ENCODE measurements at regions of chr3 and their contacts with region 1.

Region 1: DNA sequence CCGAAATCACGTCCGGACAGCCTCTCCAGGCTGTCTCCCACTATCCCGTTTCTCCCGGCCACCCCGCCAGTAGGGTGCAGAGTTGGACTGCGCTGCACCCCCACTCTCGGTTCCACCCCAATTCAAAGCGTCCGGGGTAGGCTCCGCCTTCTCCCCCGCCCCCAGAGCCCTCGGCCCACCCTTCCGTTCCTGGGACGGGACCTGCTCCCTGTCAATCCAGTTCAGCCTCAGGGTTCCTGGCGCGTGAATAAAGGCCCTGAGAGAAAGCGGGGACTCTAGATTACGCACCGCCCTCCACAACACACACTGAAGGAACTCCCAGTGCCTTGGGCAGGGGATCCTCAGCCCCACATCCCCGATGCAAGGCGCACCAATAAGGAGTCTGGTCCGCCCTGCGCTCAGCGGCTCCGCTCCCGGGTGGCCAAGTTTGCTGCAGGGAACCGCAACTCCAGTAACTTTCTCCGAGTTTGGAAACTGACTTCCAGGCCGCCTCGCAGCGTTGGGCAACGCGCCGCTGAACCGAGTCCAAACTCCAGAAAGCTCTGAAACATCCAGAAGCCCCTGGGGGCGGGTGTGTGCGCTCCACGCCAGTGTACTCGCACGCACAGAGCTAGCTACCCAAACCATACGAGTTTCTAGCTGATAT is 1.9 kb downstream of the ADAMTS9 start:
- DNase-seq: peak; percentile 90 to 96
- ATAC-seq: peak; percentile 85 to 90 (median 88)
- H3K4me3 ChIP-seq: peak overlapping the region; percentile 78
- H3K27ac ChIP-seq: peak overlapping the region; percentile 92
- H3K4me1 ChIP-seq: peaks cover 4% of the 10 kb centered on the region
- H3K27me3 ChIP-seq: no peaks in the 10 kb centered on the region
- CTCF ChIP-seq: peak; percentile 36

Region 2: DNA sequence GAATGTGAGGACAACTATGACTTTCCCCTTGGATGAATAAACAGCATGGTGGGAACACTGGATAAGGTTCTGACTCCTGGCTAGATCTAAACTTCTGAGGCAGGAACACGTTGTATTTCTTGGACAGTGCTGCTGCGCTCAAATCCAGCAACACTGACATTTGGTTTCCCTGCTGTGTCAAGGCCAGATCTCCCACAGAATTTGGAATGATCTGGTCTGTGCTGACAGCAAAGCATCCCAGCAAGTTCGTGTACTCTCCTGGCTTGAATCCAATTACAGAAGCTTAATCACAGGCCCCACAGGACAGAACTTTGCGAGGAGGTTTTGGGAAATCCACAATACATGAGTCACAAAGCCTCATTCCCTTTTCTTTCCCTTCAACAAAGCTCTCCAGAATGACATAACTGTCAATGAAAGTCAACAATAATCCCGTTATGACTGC is 90.6 kb before region 1 on chr3:
- intact Hi-C with region 1: no loop called
- DNase-seq: peak; percentile 35 to 53
- ATAC-seq: peak; percentile 46 to 90 (median 84)
- H3K4me3 ChIP-seq: no peak overlapping the region
- H3K27ac ChIP-seq: peak overlapping the region; percentile 46
- H3K4me1 ChIP-seq: peaks cover 14% of the 10 kb centered on the region
- H3K27me3 ChIP-seq: no peaks in the 10 kb centered on the region
- CTCF ChIP-seq: no peak

Region 3: GRCh38 chr3:64612082-64612860 is 73.7 kb before region 1 on chr3:
- intact Hi-C with region 1: loop called in 1 of 2 experiments (anchors 5 kb)
- DNase-seq: no peak
- ATAC-seq: peak; percentile 93 to 98 (median 97)
- H3K4me3 ChIP-seq: peak overlapping the region; percentile 52
- H3K27ac ChIP-seq: peak overlapping the region; percentile 85
- H3K4me1 ChIP-seq: peaks cover 48% of the 10 kb centered on the region
- H3K27me3 ChIP-seq: no peaks in the 10 kb centered on the region
- CTCF ChIP-seq: no peak

Region 4: GRCh38 chr3:64763980-64764379 is 78.1 kb after region 1 on chr3:
- intact Hi-C with region 1: loop called (anchors 5 kb)
- DNase-seq: no peak
- ATAC-seq: no peak
- H3K4me3 ChIP-seq: no peak overlapping the region
- H3K27ac ChIP-seq: no peak overlapping the region
- H3K4me1 ChIP-seq: peaks cover 22% of the 10 kb centered on the region
- H3K27me3 ChIP-seq: no peaks in the 10 kb centered on the region
- CTCF ChIP-seq: no peak

Region 5: GRCh38 chr3:65170390-65171042 is 484.6 kb after region 1 on chr3:
- intact Hi-C with region 1: loop called in 1 of 2 experiments (anchors 5 kb)
- DNase-seq: peak; percentile 84 to 92
- ATAC-seq: peak; percentile 49 to 92 (median 78)
- H3K4me3 ChIP-seq: no peak overlapping the region
- H3K27ac ChIP-seq: peak overlapping the region; percentile 59
- H3K4me1 ChIP-seq: no peaks in the 10 kb centered on the region
- H3K27me3 ChIP-seq: no peaks in the 10 kb centered on the region
- CTCF ChIP-seq: peak; percentile 47

Region 6: DNA sequence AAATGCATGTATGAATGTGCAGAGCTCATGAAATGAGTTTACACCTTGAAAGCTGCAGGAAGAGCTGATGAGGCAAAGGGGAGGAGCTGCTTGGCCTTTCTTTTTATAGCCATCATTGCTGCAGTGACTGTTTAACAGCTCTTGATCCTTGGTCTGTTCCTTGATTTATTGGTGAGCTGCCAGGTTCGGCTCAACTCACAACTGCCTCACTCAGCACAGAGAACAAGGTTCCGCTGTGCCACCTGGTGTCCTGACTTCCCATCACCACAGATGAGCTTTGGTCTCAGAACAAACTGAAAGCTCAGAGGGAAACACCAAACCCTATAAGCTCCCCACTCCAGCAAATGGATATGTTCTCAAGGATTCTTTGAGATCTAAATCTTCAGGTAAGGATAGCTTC is 726.7 kb after region 1 on chr3:
- intact Hi-C with region 1: loop called in 1 of 2 experiments (anchors 10 kb)
- DNase-seq: peak; percentile 25 to 69
- ATAC-seq: peak; percentile 87 to 99 (median 94)
- H3K4me3 ChIP-seq: no peak overlapping the region
- H3K27ac ChIP-seq: no peak overlapping the region
- H3K4me1 ChIP-seq: peaks cover 12% of the 10 kb centered on the region
- H3K27me3 ChIP-seq: no peaks in the 10 kb centered on the region
- CTCF ChIP-seq: peak; percentile 41